Ascending aorta (tissue), 2 donors: ENCODE measurements at regions of chr11 and their contacts with region 1.

Region 1: DNA sequence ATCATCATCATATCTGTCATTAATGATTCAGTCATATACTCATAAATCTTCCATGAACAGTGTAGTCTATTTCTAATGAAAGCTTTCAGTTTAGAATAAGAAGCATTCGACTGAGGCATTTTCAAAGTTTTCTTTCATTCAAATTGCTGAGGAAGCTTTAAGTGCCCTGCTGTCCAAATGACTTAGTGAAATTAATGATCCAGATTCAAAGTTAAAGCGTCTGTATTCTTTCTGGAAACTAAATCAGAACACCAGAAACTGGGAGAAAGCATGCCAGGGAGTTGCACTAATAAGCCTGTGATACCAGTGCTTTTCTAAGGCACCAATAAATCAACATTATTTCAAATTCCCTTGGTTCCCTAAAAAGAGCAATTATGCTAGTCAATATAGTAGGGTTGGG is 367.8 kb upstream of the ANO5 start:
- DNase-seq: no peak
- H3K4me3 ChIP-seq: no peak overlapping the region
- H3K27ac ChIP-seq: no peak overlapping the region
- H3K4me1 ChIP-seq: peaks cover 0 to 11% of the 10 kb centered on the region in 2 donors
- H3K27me3 ChIP-seq: no peaks in the 10 kb centered on the region
- CTCF ChIP-seq: no peak

Region 2: GRCh38 chr11:21771097-21771496 is 54.0 kb before region 1 on chr11:
- intact Hi-C with region 1: loop called (anchors 5 kb)
- DNase-seq: no peak
- H3K4me3 ChIP-seq: no peak overlapping the region
- H3K27ac ChIP-seq: no peak overlapping the region
- H3K4me1 ChIP-seq: no peaks in the 10 kb centered on the region
- H3K27me3 ChIP-seq: no peaks in the 10 kb centered on the region
- CTCF ChIP-seq: no peak

Region 3: DNA sequence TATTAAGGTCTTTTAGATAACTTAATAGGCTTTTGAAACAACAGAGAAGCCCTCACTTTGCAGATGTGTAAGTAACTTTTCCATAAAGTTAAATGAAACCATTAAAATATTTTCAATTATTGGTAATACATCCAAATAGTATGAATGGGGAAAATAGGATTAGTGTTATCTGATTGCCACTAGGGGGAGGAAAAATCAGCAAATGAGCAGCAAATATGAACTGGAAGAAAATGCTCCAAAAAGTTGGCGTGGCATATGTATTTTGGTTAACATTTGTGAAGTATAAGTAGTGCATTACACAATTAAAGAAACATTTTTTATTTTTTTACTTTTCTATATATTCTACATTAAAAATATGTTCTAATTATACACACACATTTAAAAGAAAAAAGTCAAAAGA is 108.0 kb after region 1 on chr11:
- intact Hi-C with region 1: loop called (anchors 10 kb)
- DNase-seq: no peak
- H3K4me3 ChIP-seq: no peak overlapping the region
- H3K27ac ChIP-seq: no peak overlapping the region
- H3K4me1 ChIP-seq: no peaks in the 10 kb centered on the region
- H3K27me3 ChIP-seq: no peaks in the 10 kb centered on the region
- CTCF ChIP-seq: peak in 1 of 3 experiments; percentile 34